ENCODE measurements at regions of chr15 and their contacts with region 1.

Region 1: DNA sequence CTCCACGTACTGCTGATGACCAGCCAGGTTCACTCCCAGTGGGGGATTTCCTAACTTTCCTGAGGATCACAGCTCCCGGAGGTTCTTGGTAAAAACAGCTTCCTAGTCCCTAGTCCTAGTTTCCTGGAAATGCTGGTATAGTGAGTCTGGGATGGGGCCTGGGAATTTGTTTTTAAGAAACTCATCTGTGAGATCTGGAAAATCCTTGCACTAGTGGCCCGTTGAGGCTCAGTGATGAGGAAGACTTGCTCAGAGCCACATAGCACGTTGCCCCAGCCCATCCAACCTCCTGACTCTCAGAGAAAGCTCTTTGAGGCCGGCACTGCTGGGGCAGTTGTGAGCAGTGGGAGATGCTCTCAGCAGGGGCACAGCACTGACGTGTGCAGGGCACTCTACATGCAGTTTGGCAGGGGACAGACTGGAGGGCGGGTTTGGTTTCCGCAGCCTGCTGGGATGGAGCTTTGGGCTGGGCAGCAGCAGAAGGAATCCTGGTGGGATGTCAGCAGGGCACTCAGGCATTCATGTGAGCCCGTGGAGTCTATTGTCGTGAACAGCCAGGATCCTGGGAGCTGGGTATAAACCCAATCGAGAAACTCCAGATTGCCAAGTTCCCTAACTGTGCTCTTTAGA is 31.6 kb downstream of the SAXO2 start:
- DNase-seq: no peak
- ATAC-seq: no peak; the same call in 1 of the 3 replicates
- H3K4me3 ChIP-seq: no peak overlapping the region
- H3K27ac ChIP-seq: no peak overlapping the region
- H3K4me1 ChIP-seq: peaks cover 0 to 7% of the 10 kb centered on the region in 2 experiments; a peak in 2 of 5 replicates
- H3K27me3 ChIP-seq: no peaks in the 10 kb centered on the region
- CTCF ChIP-seq: no peak
- EP300 ChIP-seq: no peak
- POLR2A ChIP-seq: no peak
- RAD21 ChIP-seq: no peak

Region 2: GRCh38 chr15:84057714-84058331 is 1763.6 kb after region 1 on chr15:
- CTCF ChIA-PET with region 1: no interaction called
- POLR2A ChIA-PET with region 1: no interaction called
- in situ Hi-C with region 1: loop called (anchors 10 kb)
- intact Hi-C with region 1: no loop called
- DNase-seq: no peak
- ATAC-seq: no peak
- H3K4me3 ChIP-seq: no peak overlapping the region
- H3K27ac ChIP-seq: no peak overlapping the region
- H3K4me1 ChIP-seq: no peaks in the 10 kb centered on the region
- H3K27me3 ChIP-seq: no peaks in the 10 kb centered on the region
- CTCF ChIP-seq: no peak
- EP300 ChIP-seq: no peak
- POLR2A ChIP-seq: no peak
- RAD21 ChIP-seq: no peak